ENCODE measurements at regions of chr3 and their contacts with region 1.

Region 1: GRCh38 chr3:66863205-66864111 is 134.6 kb upstream of the KBTBD8 start:
- DNase-seq: no peak
- H3K4me3 Mint-ChIP-seq: no peak overlapping the region
- H3K27ac Mint-ChIP-seq: no peak overlapping the region
- H3K4me1 Mint-ChIP-seq: no peaks in the 10 kb centered on the region
- H3K27me3 Mint-ChIP-seq: no peaks in the 10 kb centered on the region
- CTCF ChIP-seq: no peak

Region 2: DNA sequence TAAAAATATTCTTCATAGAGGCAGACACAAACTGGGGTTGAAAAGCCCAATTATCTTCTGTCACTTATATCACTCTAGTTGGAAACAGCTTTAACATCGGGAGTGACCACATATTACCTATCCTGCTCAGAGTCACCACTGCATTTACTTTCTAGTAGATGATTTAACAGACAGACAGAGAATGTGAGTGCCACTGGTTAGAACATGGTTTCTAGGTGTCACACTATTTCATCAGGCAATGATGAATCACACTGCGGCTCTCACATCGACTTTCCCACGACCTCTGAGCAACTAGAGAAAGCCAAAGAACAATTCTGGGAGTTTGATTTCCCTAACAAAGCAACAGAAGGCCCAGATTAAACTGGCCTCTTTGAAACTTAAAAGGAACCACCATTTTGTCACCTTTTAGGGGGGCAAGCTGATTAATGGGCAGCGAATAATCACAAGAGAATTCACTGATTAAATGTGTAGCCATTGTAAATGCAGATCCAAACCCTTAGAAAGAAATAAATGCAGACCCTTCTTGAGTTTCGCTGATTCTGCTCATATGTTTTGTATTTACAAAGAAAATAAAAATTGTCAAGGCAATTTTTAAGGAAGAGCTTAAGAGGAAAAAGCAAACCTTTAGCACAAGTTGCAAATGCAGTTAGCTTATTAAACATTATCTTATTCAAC is 22.0 kb after region 1 on chr3:
- CTCF ChIA-PET with region 1: no interaction called
- intact Hi-C with region 1: loop called (anchors 2 kb)
- DNase-seq: peak; percentile 60
- H3K4me3 Mint-ChIP-seq: no peak overlapping the region
- H3K27ac Mint-ChIP-seq: peak overlapping the region; percentile 94
- H3K4me1 Mint-ChIP-seq: peaks cover 21% of the 10 kb centered on the region
- H3K27me3 Mint-ChIP-seq: no peaks in the 10 kb centered on the region
- CTCF ChIP-seq: no peak

Region 3: GRCh38 chr3:67018105-67018788 is 154.8 kb after region 1 on chr3:
- CTCF ChIA-PET with region 1: no interaction called
- intact Hi-C with region 1: no loop called
- DNase-seq: peak; percentile 8
- H3K4me3 Mint-ChIP-seq: no peak overlapping the region
- H3K27ac Mint-ChIP-seq: no peak overlapping the region
- H3K4me1 Mint-ChIP-seq: peaks cover 27% of the 10 kb centered on the region
- H3K27me3 Mint-ChIP-seq: peaks cover 9% of the 10 kb centered on the region
- CTCF ChIP-seq: no peak